ENCODE measurements at regions of chr14 and their contacts with region 1.

Region 1: DNA sequence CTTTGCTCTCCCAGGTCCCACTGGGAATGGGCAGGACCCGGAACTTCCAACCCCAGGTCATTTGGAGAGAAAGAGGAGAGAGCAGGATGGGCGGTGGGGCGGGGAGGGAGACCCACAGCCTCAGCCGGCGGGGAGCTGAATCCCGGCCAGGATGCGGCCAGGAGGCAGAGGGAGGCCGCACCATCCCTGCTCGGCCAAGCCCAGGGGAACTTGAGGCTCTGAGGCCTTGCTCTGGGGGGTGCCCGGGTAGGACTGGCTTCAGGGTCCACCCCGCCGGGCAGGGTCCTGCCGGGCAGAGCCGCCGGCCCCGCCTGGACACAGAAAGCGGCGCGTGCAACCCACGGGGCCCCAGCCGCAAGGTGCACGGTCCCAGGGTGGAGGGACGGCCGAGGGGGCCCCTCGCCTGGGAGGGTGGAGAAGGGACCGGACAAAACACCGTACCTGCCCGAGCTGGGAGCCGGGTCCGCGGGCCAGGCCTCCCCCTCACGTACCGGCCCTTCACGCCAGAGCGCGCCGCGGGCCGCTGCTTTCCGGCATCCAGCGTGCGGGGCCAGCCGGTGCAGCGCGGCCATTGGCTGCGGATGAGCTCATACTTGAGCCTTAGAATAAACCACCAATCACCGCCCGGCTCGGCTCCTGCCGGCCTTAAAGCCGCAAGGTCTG is at the start of gene RPS6KL1:
- DNase-seq: peak; percentile 33
- H3K4me3 ChIP-seq: peak within 1 kb of the TSS; percentile 46
- CTCF ChIP-seq: no peak

Region 2: GRCh38 chr14:74840603-74841030 is 82.3 kb before region 1 on chr14:
- in situ Hi-C with region 1: no loop called
- DNase-seq: no peak
- H3K4me3 ChIP-seq: no peak overlapping the region
- CTCF ChIP-seq: no peak

Region 3: DNA sequence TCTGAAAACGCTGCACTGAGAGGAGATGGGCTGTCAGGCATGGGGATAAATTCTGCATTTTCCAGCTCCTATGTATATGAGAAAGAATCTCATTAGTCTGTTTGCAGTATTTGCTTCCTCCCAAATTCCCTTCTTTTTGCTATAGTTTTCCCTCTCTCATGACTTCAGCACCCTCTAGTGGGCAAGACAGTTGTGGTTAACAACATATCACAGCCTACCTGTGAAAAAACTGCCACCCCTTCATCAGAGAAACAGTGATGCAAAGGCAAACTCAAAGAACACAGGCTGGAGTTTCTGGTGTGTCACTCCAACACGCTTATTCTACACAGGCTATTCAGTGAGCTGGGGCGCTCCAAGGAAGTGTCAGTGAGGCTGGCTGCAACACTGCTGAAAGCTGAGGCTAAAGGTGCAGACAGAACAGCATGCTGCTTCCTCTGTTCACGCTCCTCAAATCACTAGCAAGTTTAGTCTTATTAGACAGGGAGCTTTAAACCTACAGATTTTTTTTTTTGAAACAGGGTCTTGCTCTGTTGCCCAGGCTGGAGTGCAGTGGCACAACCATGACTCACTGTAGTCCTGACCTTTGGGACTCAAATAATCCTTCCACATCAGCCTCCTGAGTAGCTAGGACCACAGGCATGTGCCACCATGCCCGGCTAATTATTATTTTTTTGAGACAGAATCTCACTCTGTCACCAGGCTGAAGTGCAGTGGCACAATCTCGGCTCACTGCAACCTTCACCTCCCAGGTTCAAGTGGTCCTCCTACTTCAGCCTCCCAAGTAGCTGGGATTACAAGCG is 165.9 kb after region 1 on chr14:
- in situ Hi-C with region 1: loop called (anchors 25 kb)
- DNase-seq: peak; percentile 53
- H3K4me3 ChIP-seq: no peak overlapping the region
- CTCF ChIP-seq: peak; percentile 79

Region 4: DNA sequence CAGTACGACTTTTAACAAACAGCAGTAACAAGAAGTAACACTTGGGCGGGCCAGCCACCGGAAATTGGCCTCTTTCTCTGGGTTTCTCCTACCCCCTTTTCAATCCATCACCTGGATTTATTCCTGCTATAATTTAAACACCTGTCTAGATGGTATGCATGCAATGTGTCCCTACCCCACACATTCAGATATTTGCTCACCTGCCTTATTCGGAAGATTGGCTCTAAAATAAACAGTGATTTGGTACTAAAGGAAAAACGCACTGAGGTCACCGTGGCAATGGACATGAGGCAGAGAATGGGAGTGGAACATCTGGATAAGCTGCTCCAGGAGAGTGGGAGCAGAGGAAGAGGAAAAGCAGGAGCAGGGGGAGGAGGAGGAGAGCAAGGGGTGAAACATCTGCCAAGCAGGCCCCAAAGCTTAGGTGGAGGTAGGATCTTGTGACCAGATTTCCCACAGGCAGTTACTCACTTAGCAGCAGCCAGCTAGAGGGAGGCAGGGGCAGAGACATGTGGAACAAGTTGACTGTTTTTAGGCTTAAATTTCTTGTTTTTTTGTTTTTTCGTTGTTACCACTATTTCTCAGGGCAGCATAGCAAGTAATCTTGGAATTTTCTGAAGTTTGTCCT is 889.1 kb after region 1 on chr14:
- in situ Hi-C with region 1: no loop called
- DNase-seq: no peak
- H3K4me3 ChIP-seq: no peak overlapping the region
- CTCF ChIP-seq: no peak

Measured in astrocyte of the cerebellum (primary cell).